CD8-positive, alpha-beta memory T cell (primary cell): ENCODE measurements at regions of chr1 and their contacts with region 1.

Region 1: DNA sequence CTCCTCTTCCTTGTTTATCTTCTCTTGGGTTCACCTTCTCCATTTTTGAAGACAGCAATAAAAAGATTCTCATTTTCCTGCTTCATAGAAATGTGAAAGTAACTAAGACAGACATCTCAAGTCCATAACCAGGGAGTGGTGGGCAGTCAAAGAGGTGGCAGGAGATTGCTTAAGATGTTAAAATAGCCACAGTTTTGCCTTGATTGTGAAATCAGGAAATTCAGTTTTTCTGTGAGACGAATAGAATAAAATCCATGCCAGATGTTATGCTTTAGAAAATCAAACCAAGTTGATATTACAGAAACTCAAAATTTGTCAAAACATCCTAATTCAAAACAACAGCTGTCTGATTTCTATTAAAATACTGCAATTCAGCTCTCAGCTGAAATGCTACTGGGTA is 57.2 kb downstream of the TNN start:
- DNase-seq: no peak
- H3K4me3 ChIP-seq: no peak overlapping the region
- H3K4me3 Mint-ChIP-seq: no peak overlapping the region
- H3K27ac ChIP-seq: no peak overlapping the region
- H3K27ac Mint-ChIP-seq: no peak overlapping the region
- H3K4me1 ChIP-seq: no peaks in the 10 kb centered on the region
- H3K4me1 Mint-ChIP-seq: no peaks in the 10 kb centered on the region
- H3K27me3 ChIP-seq: no peaks in the 10 kb centered on the region
- H3K27me3 Mint-ChIP-seq: peaks cover 1 to 4% of the 10 kb centered on the region in 2 donors

Region 2: DNA sequence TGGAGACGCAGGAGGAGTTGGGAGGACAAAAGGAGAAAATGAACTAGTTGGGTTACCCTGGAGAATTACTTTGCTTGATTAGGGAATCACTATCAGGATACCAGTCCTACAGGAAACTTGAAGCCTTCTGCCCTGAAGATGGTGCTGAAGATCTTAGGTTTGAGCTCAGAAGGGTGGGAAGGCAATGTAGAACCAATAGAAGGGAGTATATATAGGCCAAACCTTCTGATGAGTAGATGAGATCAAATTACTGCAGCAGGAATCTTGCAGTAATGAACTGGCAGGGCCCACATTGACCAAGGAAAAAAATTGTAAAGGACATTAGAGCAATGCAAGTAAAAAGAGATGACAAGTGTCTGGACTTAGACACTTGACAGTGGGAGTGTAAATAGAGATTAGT is 241.5 kb before region 1 on chr1:
- CTCF ChIA-PET with region 1: no interaction called
- POLR2A ChIA-PET with region 1: no interaction called
- DNase-seq: peak in 1 of 5 donors; percentile 18
- H3K4me3 ChIP-seq: no peak overlapping the region
- H3K4me3 Mint-ChIP-seq: no peak overlapping the region
- H3K27ac ChIP-seq: no peak overlapping the region
- H3K27ac Mint-ChIP-seq: peak overlapping the region in 4 of 8 donors; percentile 18 to 41 (median 24)
- H3K4me1 ChIP-seq: no peaks in the 10 kb centered on the region
- H3K4me1 Mint-ChIP-seq: peaks cover 4 to 10% (median 7%) of the 10 kb centered on the region in 3 donors
- H3K27me3 ChIP-seq: no peaks in the 10 kb centered on the region
- H3K27me3 Mint-ChIP-seq: no peaks in the 10 kb centered on the region

Region 3: GRCh38 chr1:175023043-175023921 is 101.6 kb before region 1 on chr1 and contains the start of gene MRPS14:
- CTCF ChIA-PET with region 1: interaction called, 39 read pairs
- POLR2A ChIA-PET with region 1: no interaction called
- DNase-seq: peak; percentile 96 to 98 (median 98)
- H3K4me3 ChIP-seq: peak within 1 kb of the TSS; percentile 94
- H3K4me3 Mint-ChIP-seq: peak within 1 kb of the TSS; percentile 87 to 95 (median 90)
- H3K27ac ChIP-seq: peak within 1 kb of the TSS; percentile 88
- H3K27ac Mint-ChIP-seq: peak within 1 kb of the TSS; percentile 87 to 99 (median 94)
- H3K4me1 ChIP-seq: peaks cover 13% of the 10 kb centered on the region
- H3K4me1 Mint-ChIP-seq: peaks cover 31 to 42% (median 39%) of the 10 kb centered on the region in 3 donors
- H3K27me3 ChIP-seq: no peaks in the 10 kb centered on the region
- H3K27me3 Mint-ChIP-seq: no peaks in the 10 kb centered on the region
- total RNA-seq, gene MRPS14: 41.0 to 41.4 TPM

Region 4: DNA sequence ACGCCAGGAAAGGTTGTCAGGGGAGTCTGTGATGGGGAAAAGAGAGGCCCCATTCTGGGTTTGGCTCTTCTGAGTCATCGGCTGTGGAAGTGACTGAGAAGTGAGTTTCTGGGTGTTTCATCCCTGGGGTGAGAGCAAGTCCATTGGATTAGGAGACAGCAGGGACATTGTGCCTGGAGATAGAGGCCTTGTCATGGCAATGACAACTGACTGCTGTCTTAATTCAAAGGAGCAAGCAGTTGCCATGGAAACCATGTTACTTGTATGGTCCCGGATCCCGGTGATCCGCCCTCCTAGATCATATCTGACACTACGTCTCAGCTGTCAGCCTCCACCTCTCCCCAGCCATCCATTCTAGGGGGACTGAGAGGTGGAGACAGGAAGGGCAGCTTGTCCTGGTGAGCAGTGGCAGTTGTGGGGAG is 33.3 kb after region 1 on chr1:
- CTCF ChIA-PET with region 1: no interaction called
- POLR2A ChIA-PET with region 1: no interaction called
- DNase-seq: no peak
- H3K4me3 ChIP-seq: no peak overlapping the region
- H3K4me3 Mint-ChIP-seq: no peak overlapping the region
- H3K27ac ChIP-seq: no peak overlapping the region
- H3K27ac Mint-ChIP-seq: peak overlapping the region in 6 of 8 donors; percentile 13 to 78 (median 45)
- H3K4me1 ChIP-seq: peaks cover 10% of the 10 kb centered on the region
- H3K4me1 Mint-ChIP-seq: peaks cover 17 to 29% (median 28%) of the 10 kb centered on the region in 3 donors
- H3K27me3 ChIP-seq: no peaks in the 10 kb centered on the region
- H3K27me3 Mint-ChIP-seq: peaks cover 6 to 7% of the 10 kb centered on the region in 2 donors